Heart left ventricle (tissue), 16 donors: ENCODE measurements at regions of chr15 and their contacts with region 1.

Region 1: GRCh38 chr15:31128919-31129768 is 27.6 kb upstream of the TRPM1 start:
- DNase-seq: peak; percentile 34 to 90 (median 73)
- ATAC-seq: peak in 3 of 4 donors; percentile 66 to 91 (median 90)
- H3K4me3 ChIP-seq: peak overlapping the region in 1 of 12 donors; percentile 20
- H3K27ac ChIP-seq: no peak overlapping the region
- H3K4me1 ChIP-seq: peaks cover 0 to 7% (median 4%) of the 10 kb centered on the region in 12 donors
- H3K27me3 ChIP-seq: no peaks in the 10 kb centered on the region
- CTCF ChIP-seq: peak; percentile 74 to 100 (median 92)
- POLR2A ChIP-seq: no peak

Region 2: GRCh38 chr15:30670056-30670455 is 459.1 kb before region 1 on chr15:
- intact Hi-C with region 1: loop called in 2 of 10 experiments (anchors 10 kb)
- DNase-seq: no peak
- ATAC-seq: no peak
- H3K4me3 ChIP-seq: no peak overlapping the region
- H3K27ac ChIP-seq: no peak overlapping the region
- H3K4me1 ChIP-seq: peaks cover 0 to 5% (median 0%) of the 10 kb centered on the region in 12 donors
- H3K27me3 ChIP-seq: no peaks in the 10 kb centered on the region
- CTCF ChIP-seq: no peak
- POLR2A ChIP-seq: no peak

Region 3: GRCh38 chr15:30824518-30825165 is 304.5 kb before region 1 on chr15:
- intact Hi-C with region 1: loop called in 1 of 10 experiments (anchors 10 kb)
- DNase-seq: no peak
- ATAC-seq: no peak
- H3K4me3 ChIP-seq: no peak overlapping the region
- H3K27ac ChIP-seq: no peak overlapping the region
- H3K4me1 ChIP-seq: no peaks in the 10 kb centered on the region
- H3K27me3 ChIP-seq: no peaks in the 10 kb centered on the region
- CTCF ChIP-seq: no peak
- POLR2A ChIP-seq: no peak

Region 4: DNA sequence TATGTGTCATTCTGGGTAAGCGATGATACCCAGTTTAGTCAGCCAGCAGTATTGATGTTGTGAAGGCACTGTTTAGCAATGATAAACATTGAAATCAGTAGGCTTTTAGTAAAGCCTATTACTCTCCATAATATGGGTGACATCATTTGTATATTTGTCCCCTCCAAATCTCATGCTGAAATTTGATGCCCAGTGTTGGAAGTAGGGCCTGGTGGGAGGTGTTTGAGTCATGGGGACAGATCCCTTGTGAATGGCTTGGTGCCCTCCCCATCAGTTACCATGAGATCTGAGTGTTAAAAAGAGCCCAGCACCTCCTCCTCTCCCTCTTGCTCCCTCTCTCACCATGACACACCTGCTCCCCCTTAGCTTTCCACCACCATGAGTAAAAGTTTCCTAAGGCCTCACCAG is 256.8 kb before region 1 on chr15:
- intact Hi-C with region 1: loop called in 1 of 10 experiments (anchors 10 kb)
- DNase-seq: no peak
- ATAC-seq: no peak
- H3K4me3 ChIP-seq: no peak overlapping the region
- H3K27ac ChIP-seq: no peak overlapping the region
- H3K4me1 ChIP-seq: no peaks in the 10 kb centered on the region
- H3K27me3 ChIP-seq: no peaks in the 10 kb centered on the region
- CTCF ChIP-seq: no peak
- POLR2A ChIP-seq: no peak

Region 5: GRCh38 chr15:30885814-30886213 is 243.3 kb before region 1 on chr15:
- intact Hi-C with region 1: no loop called
- DNase-seq: peak in 1 of 5 donors; percentile 27
- ATAC-seq: peak in 2 of 4 donors; percentile 56 to 79
- H3K4me3 ChIP-seq: no peak overlapping the region
- H3K27ac ChIP-seq: no peak overlapping the region
- H3K4me1 ChIP-seq: peaks cover 0 to 6% (median 0%) of the 10 kb centered on the region in 12 donors
- H3K27me3 ChIP-seq: no peaks in the 10 kb centered on the region
- CTCF ChIP-seq: no peak
- POLR2A ChIP-seq: no peak

Region 6: GRCh38 chr15:30903497-30904201 is 225.5 kb before region 1 on chr15 and contains the start of gene FAN1:
- intact Hi-C with region 1: loop called in 3 of 10 experiments (anchors 5 kb)
- DNase-seq: peak; percentile 83 to 92 (median 89)
- ATAC-seq: peak; percentile 97 to 100 (median 99)
- H3K4me3 ChIP-seq: peak within 1 kb of the TSS; percentile 57 to 94 (median 70)
- H3K27ac ChIP-seq: peak within 1 kb of the TSS; percentile 4 to 89 (median 78)
- H3K4me1 ChIP-seq: peaks cover 0 to 33% (median 14%) of the 10 kb centered on the region in 12 donors
- H3K27me3 ChIP-seq: no peaks in the 10 kb centered on the region
- CTCF ChIP-seq: peak in 2 of 12 donors; percentile 7 to 15
- POLR2A ChIP-seq: peak in 1 of 2 donors; percentile 55
- total RNA-seq, gene FAN1: 7.3 to 21.4 (median 17.5) TPM

Region 7: GRCh38 chr15:30985081-30985531 is 144.0 kb before region 1 on chr15:
- intact Hi-C with region 1: loop called in 5 of 10 experiments (anchors 5 to 10 kb)
- DNase-seq: peak in 3 of 5 donors; percentile 29 to 39 (median 32)
- ATAC-seq: peak; percentile 42 to 86 (median 54)
- H3K4me3 ChIP-seq: peak overlapping the region in 1 of 12 donors; percentile 16
- H3K27ac ChIP-seq: peak overlapping the region in 10 of 12 donors; percentile 1 to 57 (median 44)
- H3K4me1 ChIP-seq: peaks cover 0 to 88% (median 70%) of the 10 kb centered on the region in 12 donors
- H3K27me3 ChIP-seq: no peaks in the 10 kb centered on the region
- CTCF ChIP-seq: no peak
- POLR2A ChIP-seq: no peak

Region 8: GRCh38 chr15:31326156-31326732 is 197.1 kb after region 1 on chr15:
- intact Hi-C with region 1: no loop called
- DNase-seq: peak; percentile 95 to 100 (median 99)
- ATAC-seq: peak; percentile 89 to 93 (median 92)
- H3K4me3 ChIP-seq: peak overlapping the region; percentile 42 to 96 (median 84)
- H3K27ac ChIP-seq: peak overlapping the region; percentile 98 to 100 (median 100)
- H3K4me1 ChIP-seq: peaks cover 0 to 50% (median 38%) of the 10 kb centered on the region in 12 donors
- H3K27me3 ChIP-seq: no peaks in the 10 kb centered on the region
- CTCF ChIP-seq: peak in 1 of 12 donors; percentile 5
- POLR2A ChIP-seq: peak; percentile 68 to 95